GM12878 (cell line): ENCODE measurements at regions of chr7 and their contacts with region 1.

Region 1: GRCh38 chr7:29239638-29240037 is 45.1 kb downstream of the CHN2 start:
- DNase-seq: no peak
- ATAC-seq: peak; percentile 63
- H3K4me3 ChIP-seq: no peak overlapping the region
- H3K27ac ChIP-seq: no peak overlapping the region
- H3K4me1 ChIP-seq: no peaks in the 10 kb centered on the region
- H3K27me3 ChIP-seq: no peaks in the 10 kb centered on the region
- CTCF ChIP-seq: peak; percentile 50 to 67 (median 56)
- EP300 ChIP-seq: no peak
- POLR2A ChIP-seq: no peak
- RAD21 ChIP-seq: no peak

Region 2: GRCh38 chr7:29189743-29190201 is 49.9 kb before region 1 on chr7:
- CTCF ChIA-PET with region 1: interaction called, 25 read pairs
- POLR2A ChIA-PET with region 1: interaction called, 3 read pairs
- RAD21 ChIA-PET with region 1: no interaction called
- SMC1A ChIA-PET with region 1: no interaction called
- in situ Hi-C with region 1: no loop called
- intact Hi-C with region 1: no loop called
- DNase-seq: no peak
- ATAC-seq: peak; percentile 95
- H3K4me3 ChIP-seq: no peak overlapping the region
- H3K27ac ChIP-seq: no peak overlapping the region
- H3K4me1 ChIP-seq: no peaks in the 10 kb centered on the region
- H3K27me3 ChIP-seq: peaks cover 0 to 10% of the 10 kb centered on the region in 2 experiments; a peak in 3 of 4 replicates
- CTCF ChIP-seq: peak; percentile 77 to 86 (median 81)
- EP300 ChIP-seq: no peak
- POLR2A ChIP-seq: no peak
- RAD21 ChIP-seq: peak; percentile 66

Region 3: DNA sequence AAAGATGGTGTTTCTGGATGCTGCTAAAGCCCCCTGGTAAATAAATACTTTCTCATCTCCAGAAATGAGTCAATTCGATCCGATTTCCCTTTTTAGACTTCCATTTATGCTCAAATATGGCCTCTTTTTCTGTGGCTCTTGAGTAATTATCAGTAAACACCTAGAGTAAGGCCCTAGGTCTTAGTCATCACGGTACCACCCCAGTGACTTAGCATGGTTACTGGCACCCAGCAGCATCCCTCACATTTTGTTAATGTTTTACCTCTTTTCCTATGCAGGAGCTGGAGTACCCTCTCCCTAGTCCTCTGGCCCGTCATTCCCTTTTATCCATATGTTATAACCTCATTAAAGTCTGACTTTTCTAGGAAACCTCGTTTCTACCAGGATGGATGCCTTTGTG is 25.6 kb before region 1 on chr7:
- CTCF ChIA-PET with region 1: no interaction called
- POLR2A ChIA-PET with region 1: no interaction called
- RAD21 ChIA-PET with region 1: no interaction called
- SMC1A ChIA-PET with region 1: no interaction called
- in situ Hi-C with region 1: no loop called
- intact Hi-C with region 1: loop called (anchors 1 kb)
- DNase-seq: no peak
- ATAC-seq: peak; percentile 74
- H3K4me3 ChIP-seq: no peak overlapping the region
- H3K27ac ChIP-seq: no peak overlapping the region
- H3K4me1 ChIP-seq: no peaks in the 10 kb centered on the region
- H3K27me3 ChIP-seq: no peaks in the 10 kb centered on the region
- CTCF ChIP-seq: no peak
- EP300 ChIP-seq: no peak
- POLR2A ChIP-seq: no peak
- RAD21 ChIP-seq: no peak

Region 4: GRCh38 chr7:29285444-29285793 is 45.8 kb after region 1 on chr7:
- CTCF ChIA-PET with region 1: interaction called, 3 read pairs
- POLR2A ChIA-PET with region 1: no interaction called
- RAD21 ChIA-PET with region 1: interaction called, 4 read pairs
- SMC1A ChIA-PET with region 1: no interaction called
- in situ Hi-C with region 1: no loop called
- intact Hi-C with region 1: loop called (anchors 2 kb)
- DNase-seq: peak; percentile 55
- ATAC-seq: peak; percentile 70
- H3K4me3 ChIP-seq: no peak overlapping the region
- H3K27ac ChIP-seq: no peak overlapping the region
- H3K4me1 ChIP-seq: peaks cover 17% of the 10 kb centered on the region
- H3K27me3 ChIP-seq: peaks cover 0 to 9% of the 10 kb centered on the region in 2 experiments; a peak in 1 of 4 replicates
- CTCF ChIP-seq: no peak
- EP300 ChIP-seq: peak; percentile 88; a peak in 3 of 4 replicates
- POLR2A ChIP-seq: no peak
- RAD21 ChIP-seq: no peak

Region 5: GRCh38 chr7:29345600-29345999 is 106.0 kb after region 1 on chr7:
- CTCF ChIA-PET with region 1: no interaction called
- POLR2A ChIA-PET with region 1: no interaction called
- RAD21 ChIA-PET with region 1: interaction called, 3 read pairs
- SMC1A ChIA-PET with region 1: no interaction called
- in situ Hi-C with region 1: no loop called
- intact Hi-C with region 1: loop called (anchors 5 kb)
- DNase-seq: no peak
- ATAC-seq: peak; percentile 71
- H3K4me3 ChIP-seq: no peak overlapping the region
- H3K27ac ChIP-seq: no peak overlapping the region
- H3K4me1 ChIP-seq: no peaks in the 10 kb centered on the region
- H3K27me3 ChIP-seq: no peaks in the 10 kb centered on the region
- CTCF ChIP-seq: peak in 2 of 3 experiments; percentile 33 to 44; a peak in 3 of 6 replicates
- EP300 ChIP-seq: no peak
- POLR2A ChIP-seq: no peak
- RAD21 ChIP-seq: no peak